GM12878 (cell line): ENCODE measurements at regions of chr7 and their contacts with region 1.

Region 1: GRCh38 chr7:99990460-99990852 is 14.6 kb upstream of the AZGP1 start:
- DNase-seq: no peak
- ATAC-seq: no peak
- H3K4me3 ChIP-seq: no peak overlapping the region
- H3K27ac ChIP-seq: no peak overlapping the region
- H3K4me1 ChIP-seq: no peaks in the 10 kb centered on the region
- H3K27me3 ChIP-seq: peaks cover 0 to 2% of the 10 kb centered on the region in 2 experiments; a peak in 3 of 4 replicates
- CTCF ChIP-seq: no peak
- EP300 ChIP-seq: no peak
- POLR2A ChIP-seq: no peak
- RAD21 ChIP-seq: no peak

Region 2: GRCh38 chr7:99798972-99799371 is 191.5 kb before region 1 on chr7:
- CTCF ChIA-PET with region 1: no interaction called
- POLR2A ChIA-PET with region 1: no interaction called
- RAD21 ChIA-PET with region 1: no interaction called
- SMC1A ChIA-PET with region 1: no interaction called
- in situ Hi-C with region 1: no loop called
- intact Hi-C with region 1: no loop called
- DNase-seq: no peak
- ATAC-seq: no peak
- H3K4me3 ChIP-seq: no peak overlapping the region
- H3K27ac ChIP-seq: no peak overlapping the region
- H3K4me1 ChIP-seq: no peaks in the 10 kb centered on the region
- H3K27me3 ChIP-seq: no peaks in the 10 kb centered on the region
- CTCF ChIP-seq: no peak
- EP300 ChIP-seq: no peak
- POLR2A ChIP-seq: no peak
- RAD21 ChIP-seq: no peak

Region 3: GRCh38 chr7:99910976-99911375 is 79.5 kb before region 1 on chr7:
- CTCF ChIA-PET with region 1: interaction called, 178 read pairs
- POLR2A ChIA-PET with region 1: no interaction called
- RAD21 ChIA-PET with region 1: interaction called, 16 read pairs
- SMC1A ChIA-PET with region 1: interaction called, 86 read pairs
- in situ Hi-C with region 1: loop called (anchors 5 kb)
- intact Hi-C with region 1: loop called (anchors 1 kb)
- DNase-seq: no peak
- ATAC-seq: no peak
- H3K4me3 ChIP-seq: no peak overlapping the region
- H3K27ac ChIP-seq: no peak overlapping the region
- H3K4me1 ChIP-seq: no peaks in the 10 kb centered on the region
- H3K27me3 ChIP-seq: no peaks in the 10 kb centered on the region
- CTCF ChIP-seq: no peak
- EP300 ChIP-seq: no peak
- POLR2A ChIP-seq: no peak
- RAD21 ChIP-seq: no peak

Region 4: GRCh38 chr7:99975782-99976521 is 14.5 kb before region 1 on chr7 and contains the start of gene AZGP1:
- CTCF ChIA-PET with region 1: interaction called, 66 read pairs
- POLR2A ChIA-PET with region 1: interaction called, 6 read pairs
- RAD21 ChIA-PET with region 1: interaction called, 14 read pairs
- SMC1A ChIA-PET with region 1: interaction called, 12 read pairs
- in situ Hi-C with region 1: no loop called
- intact Hi-C with region 1: no loop called
- DNase-seq: no peak
- ATAC-seq: peak; percentile 68
- H3K4me3 ChIP-seq: no peak within 1 kb of the TSS
- H3K27ac ChIP-seq: no peak within 1 kb of the TSS
- H3K4me1 ChIP-seq: no peaks in the 10 kb centered on the region
- H3K27me3 ChIP-seq: no peaks in the 10 kb centered on the region
- CTCF ChIP-seq: no peak
- EP300 ChIP-seq: no peak
- POLR2A ChIP-seq: no peak
- RAD21 ChIP-seq: no peak
- polyA plus RNA-seq, gene AZGP1: not detected

Region 5: DNA sequence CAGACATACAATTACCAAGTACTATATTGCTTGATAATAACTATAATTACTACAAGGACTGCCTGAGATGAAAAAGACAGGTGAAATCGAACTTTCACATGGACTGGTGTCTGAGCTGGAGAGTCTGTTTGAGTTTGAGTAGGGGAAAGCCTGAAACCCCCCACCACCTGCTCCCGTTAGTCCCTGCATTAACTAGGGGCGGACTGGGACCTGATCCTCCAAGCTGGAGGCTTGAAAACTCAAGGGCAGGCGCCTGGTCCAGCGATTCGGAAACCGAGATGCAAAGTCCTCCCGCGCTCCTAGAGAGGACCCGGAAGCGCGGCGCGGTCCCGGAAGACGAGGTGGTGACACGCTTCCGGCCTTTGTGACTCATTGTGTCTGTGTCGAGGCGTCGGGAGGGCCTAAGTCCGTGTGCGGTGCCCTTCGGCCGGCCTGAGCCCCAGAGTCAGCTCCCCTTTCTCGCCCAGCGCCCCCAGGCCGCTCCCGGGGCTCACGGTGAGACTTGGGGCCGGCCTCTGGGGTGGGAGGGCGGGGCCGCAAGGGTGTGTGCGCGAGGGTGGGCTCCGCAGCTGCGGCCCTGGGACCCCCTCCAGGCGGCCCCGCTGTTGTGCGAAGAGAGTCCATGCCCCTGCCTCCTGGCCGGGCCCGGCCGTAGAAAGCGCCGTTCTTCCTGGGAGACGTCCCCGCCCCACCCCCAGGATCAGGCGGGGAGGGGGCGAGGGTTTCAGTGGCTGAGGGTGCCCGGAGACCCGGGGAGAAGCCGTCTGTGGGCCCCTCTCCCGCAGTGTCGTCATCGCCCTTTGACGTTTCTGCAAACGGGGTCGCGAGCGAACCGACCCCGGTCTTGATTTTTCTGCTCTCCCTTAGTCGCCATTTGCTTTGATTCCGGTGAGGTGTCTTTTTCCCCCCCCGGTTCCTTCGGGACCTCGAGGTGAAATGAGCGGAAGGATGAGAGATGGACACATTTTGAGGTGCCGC is 25.1 kb after region 1 on chr7 and contains the start of gene ZKSCAN1:
- CTCF ChIA-PET with region 1: interaction called, 13 read pairs
- POLR2A ChIA-PET with region 1: interaction called, 3 read pairs
- RAD21 ChIA-PET with region 1: interaction called, 3 read pairs
- SMC1A ChIA-PET with region 1: interaction called, 3 read pairs
- in situ Hi-C with region 1: no loop called
- intact Hi-C with region 1: no loop called
- DNase-seq: peak; percentile 56
- ATAC-seq: peak; percentile 98
- H3K4me3 ChIP-seq: peak within 1 kb of the TSS; percentile 92
- H3K27ac ChIP-seq: peak within 1 kb of the TSS; percentile 90
- H3K4me1 ChIP-seq: peaks cover 4% of the 10 kb centered on the region; the same call in 1 of the 2 replicates
- H3K27me3 ChIP-seq: no peaks in the 10 kb centered on the region
- CTCF ChIP-seq: no peak
- EP300 ChIP-seq: no peak
- POLR2A ChIP-seq: peak; percentile 98
- RAD21 ChIP-seq: no peak
- polyA plus RNA-seq, gene ZKSCAN1: 3.2 to 4.6 TPM

Region 6: GRCh38 chr7:100049441-100050311 is 59.2 kb after region 1 on chr7 and contains the start of gene ZSCAN21:
- CTCF ChIA-PET with region 1: interaction called, 39 read pairs
- POLR2A ChIA-PET with region 1: no interaction called
- RAD21 ChIA-PET with region 1: interaction called, 3 read pairs
- SMC1A ChIA-PET with region 1: interaction called, 3 read pairs
- in situ Hi-C with region 1: no loop called
- intact Hi-C with region 1: no loop called
- DNase-seq: peak; percentile 25
- ATAC-seq: peak; percentile 95
- H3K4me3 ChIP-seq: peak within 1 kb of the TSS; percentile 83
- H3K27ac ChIP-seq: peak within 1 kb of the TSS; percentile 82
- H3K4me1 ChIP-seq: peaks cover 7% of the 10 kb centered on the region
- H3K27me3 ChIP-seq: no peaks in the 10 kb centered on the region
- CTCF ChIP-seq: peak in 2 of 3 experiments; percentile 15; a peak in 2 of 6 replicates
- EP300 ChIP-seq: no peak
- POLR2A ChIP-seq: peak; percentile 95
- RAD21 ChIP-seq: no peak
- polyA plus RNA-seq, gene ZSCAN21: 1.9 to 3.1 TPM